ENCODE measurements at regions of chr2 and their contacts with region 1.

Region 1: GRCh38 chr2:219057709-219058540 is 2.8 kb downstream of the IHH start:
- DNase-seq: peak; percentile 84
- ATAC-seq: peak; percentile 91 to 92
- H3K4me3 ChIP-seq: peak overlapping the region; percentile 46
- H3K27ac ChIP-seq: no peak overlapping the region
- H3K4me1 ChIP-seq: peaks cover 39% of the 10 kb centered on the region
- H3K27me3 ChIP-seq: peaks cover 55% of the 10 kb centered on the region
- CTCF ChIP-seq: peak; percentile 97

Region 2: DNA sequence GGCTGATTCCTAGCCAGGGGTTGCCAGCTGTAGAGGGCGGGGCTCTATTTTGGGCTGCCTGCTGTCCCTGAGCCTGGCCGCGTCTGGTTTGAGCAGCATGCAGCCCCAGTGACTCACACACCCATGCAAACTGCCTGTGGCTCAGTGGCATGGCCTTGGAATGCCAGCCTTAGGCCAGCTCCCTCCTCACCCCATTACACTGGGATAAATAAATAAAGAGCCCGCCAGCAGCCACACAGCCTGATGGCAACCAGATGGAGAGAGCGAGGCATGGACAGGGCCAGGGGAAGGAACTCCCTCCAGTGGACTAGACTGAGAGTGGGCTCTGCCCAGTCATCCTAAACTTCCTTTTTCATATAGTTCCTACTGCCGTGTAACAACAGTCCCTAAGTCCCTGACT is 84.4 kb after region 1 on chr2:
- intact Hi-C with region 1: loop called (anchors 10 kb)
- DNase-seq: no peak
- ATAC-seq: peak in 1 of 2 donors; percentile 13
- H3K4me3 ChIP-seq: no peak overlapping the region
- H3K27ac ChIP-seq: no peak overlapping the region
- H3K4me1 ChIP-seq: no peaks in the 10 kb centered on the region
- H3K27me3 ChIP-seq: no peaks in the 10 kb centered on the region
- CTCF ChIP-seq: no peak

Measured in lower lobe of right lung (tissue), 2 donors.